ENCODE measurements at regions of chr3 and their contacts with region 1.

Region 1: GRCh38 chr3:100708967-100709841 is at the start of gene TFG:
- DNase-seq: peak; percentile 94 to 98 (median 96)
- ATAC-seq: peak; percentile 95
- H3K4me3 ChIP-seq: peak within 1 kb of the TSS; percentile 68
- H3K4me3 Mint-ChIP-seq: peak within 1 kb of the TSS; percentile 85 to 98 (median 94)
- H3K27ac ChIP-seq: peak within 1 kb of the TSS; percentile 90
- H3K27ac Mint-ChIP-seq: peak within 1 kb of the TSS; percentile 95 to 99 (median 98)
- H3K4me1 ChIP-seq: peaks cover 19 to 21% of the 10 kb centered on the region in 2 donors
- H3K4me1 Mint-ChIP-seq: peaks cover 32 to 50% (median 47%) of the 10 kb centered on the region in 7 donors
- H3K27me3 ChIP-seq: no peaks in the 10 kb centered on the region
- H3K27me3 Mint-ChIP-seq: peaks cover 0 to 14% (median 6%) of the 10 kb centered on the region in 5 donors
- total RNA-seq, gene TFG: 40.8 to 72.2 (median 45.6) TPM

Region 2: DNA sequence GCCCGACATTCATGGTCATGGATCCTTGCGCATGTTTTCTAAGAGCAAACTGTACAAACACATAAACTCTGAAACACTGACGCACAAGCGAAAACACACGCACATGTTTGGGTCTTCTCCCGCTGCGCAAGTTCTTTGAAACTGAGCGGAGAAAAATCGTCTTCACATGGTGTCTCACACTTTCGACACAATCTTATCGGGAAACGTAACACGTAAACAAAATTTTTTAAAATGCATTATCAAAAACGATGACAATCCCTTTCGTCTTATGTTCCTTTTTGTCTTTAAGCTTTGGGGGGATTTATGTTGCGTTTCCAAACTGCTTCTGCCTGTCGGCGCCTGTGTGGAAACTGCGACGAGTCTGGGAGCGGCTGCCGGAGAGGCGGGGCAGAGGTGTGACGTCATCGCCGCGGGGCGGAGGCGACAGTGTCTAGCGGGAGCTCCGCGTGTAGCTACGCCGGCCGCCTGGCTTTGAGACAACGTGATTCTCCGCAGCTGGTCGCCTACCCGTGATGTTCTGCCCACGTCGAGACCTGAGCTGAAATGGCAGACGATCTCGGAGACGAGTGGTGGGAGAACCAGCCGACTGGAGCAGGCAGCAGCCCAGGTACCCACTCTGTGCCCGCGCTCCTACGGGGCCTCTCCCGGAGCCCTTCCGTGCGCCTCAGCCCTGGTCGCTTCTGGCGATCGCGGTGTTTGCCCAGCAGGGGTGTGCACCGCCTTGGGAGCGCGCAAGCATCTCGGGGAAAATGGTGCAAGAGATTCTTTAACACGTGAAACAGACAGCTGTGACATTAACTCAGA is 891.6 kb before region 1 on chr3 and contains the start of gene CMSS1:
- CTCF ChIA-PET with region 1: no interaction called
- POLR2A ChIA-PET with region 1: no interaction called
- intact Hi-C with region 1: loop called (anchors 1 to 5 kb)
- DNase-seq: peak; percentile 96 to 98 (median 97)
- ATAC-seq: peak; percentile 94
- H3K4me3 ChIP-seq: peak within 1 kb of the TSS; percentile 80
- H3K4me3 Mint-ChIP-seq: peak within 1 kb of the TSS; percentile 84 to 99 (median 95)
- H3K27ac ChIP-seq: peak within 1 kb of the TSS; percentile 90
- H3K27ac Mint-ChIP-seq: peak within 1 kb of the TSS; percentile 93 to 100 (median 100)
- H3K4me1 ChIP-seq: peaks cover 18 to 22% of the 10 kb centered on the region in 2 donors
- H3K4me1 Mint-ChIP-seq: peaks cover 19 to 62% (median 41%) of the 10 kb centered on the region in 7 donors
- H3K27me3 ChIP-seq: no peaks in the 10 kb centered on the region
- H3K27me3 Mint-ChIP-seq: no peaks in the 10 kb centered on the region
- total RNA-seq, gene CMSS1: 14.9 to 47.7 (median 18.2) TPM

Region 3: DNA sequence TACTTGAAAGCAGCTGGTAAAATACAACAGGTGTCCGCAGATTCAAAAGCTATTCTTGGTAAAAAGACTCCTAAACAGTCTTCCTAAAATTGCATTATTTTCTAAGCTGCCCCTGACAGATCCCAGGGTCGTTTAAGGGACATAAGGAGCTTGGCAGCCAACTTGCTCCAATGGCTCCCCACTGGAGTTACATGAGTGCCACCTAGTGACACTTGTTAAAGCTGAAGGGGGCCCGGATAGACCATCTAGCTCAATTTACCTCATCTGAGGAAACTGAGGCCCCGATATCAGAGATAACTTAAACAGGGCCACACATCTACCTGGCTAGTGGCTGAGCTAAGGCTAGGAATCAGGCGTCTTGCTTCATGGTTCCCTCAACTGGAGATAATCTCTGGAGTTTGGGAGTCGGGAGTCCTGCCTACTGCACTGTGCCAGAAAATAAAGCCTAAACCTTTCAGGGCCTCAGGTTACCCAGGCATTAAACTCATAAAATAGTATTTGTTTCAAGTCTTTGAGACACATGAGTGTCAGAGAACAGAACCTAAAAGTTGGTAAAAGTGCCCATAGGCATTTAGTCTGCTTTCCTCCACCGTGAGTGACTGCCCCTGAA is 454.9 kb before region 1 on chr3:
- CTCF ChIA-PET with region 1: no interaction called
- POLR2A ChIA-PET with region 1: no interaction called
- intact Hi-C with region 1: no loop called
- DNase-seq: peak in 6 of 9 donors; percentile 12 to 44 (median 22)
- ATAC-seq: peak; percentile 70
- H3K4me3 ChIP-seq: no peak overlapping the region
- H3K4me3 Mint-ChIP-seq: no peak overlapping the region
- H3K27ac ChIP-seq: no peak overlapping the region
- H3K27ac Mint-ChIP-seq: no peak overlapping the region
- H3K4me1 ChIP-seq: no peaks in the 10 kb centered on the region
- H3K4me1 Mint-ChIP-seq: peaks cover 0 to 16% (median 11%) of the 10 kb centered on the region in 7 donors
- H3K27me3 ChIP-seq: no peaks in the 10 kb centered on the region
- H3K27me3 Mint-ChIP-seq: no peaks in the 10 kb centered on the region

Region 4: GRCh38 chr3:100334488-100335351 is 374.5 kb before region 1 on chr3 and contains the start of gene NIT2:
- CTCF ChIA-PET with region 1: no interaction called
- POLR2A ChIA-PET with region 1: no interaction called
- intact Hi-C with region 1: loop called (anchors 1 to 2 kb)
- DNase-seq: peak; percentile 49 to 79 (median 65)
- ATAC-seq: peak; percentile 97
- H3K4me3 ChIP-seq: peak within 1 kb of the TSS; percentile 72
- H3K4me3 Mint-ChIP-seq: peak within 1 kb of the TSS; percentile 86 to 99 (median 94)
- H3K27ac ChIP-seq: peak within 1 kb of the TSS; percentile 76
- H3K27ac Mint-ChIP-seq: peak within 1 kb of the TSS; percentile 87 to 97 (median 93)
- H3K4me1 ChIP-seq: peaks cover 8 to 12% of the 10 kb centered on the region in 2 donors
- H3K4me1 Mint-ChIP-seq: peaks cover 11 to 40% (median 30%) of the 10 kb centered on the region in 7 donors
- H3K27me3 ChIP-seq: no peaks in the 10 kb centered on the region
- H3K27me3 Mint-ChIP-seq: no peaks in the 10 kb centered on the region
- total RNA-seq, gene NIT2: 25.3 to 51.6 (median 30.6) TPM

Region 5: DNA sequence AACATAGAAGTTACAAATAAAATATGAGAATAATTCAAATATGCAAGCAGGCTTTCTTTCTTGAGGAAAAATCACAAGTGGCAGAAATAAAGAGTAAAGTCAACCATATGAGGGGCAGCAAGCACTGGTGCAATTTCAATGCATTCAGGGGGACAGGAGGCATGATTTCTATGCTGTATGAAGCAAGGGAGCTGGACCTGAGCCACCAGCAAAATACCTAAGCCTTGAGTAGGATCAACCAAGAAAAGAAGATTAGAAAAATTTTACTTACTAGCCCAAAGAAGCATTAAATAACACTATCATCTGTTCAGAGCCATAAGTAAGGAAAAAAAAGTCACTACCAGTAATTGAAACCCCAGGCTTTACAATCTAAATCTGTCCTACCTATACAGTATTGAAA is 93.5 kb before region 1 on chr3:
- CTCF ChIA-PET with region 1: no interaction called
- POLR2A ChIA-PET with region 1: no interaction called
- intact Hi-C with region 1: no loop called
- DNase-seq: no peak
- ATAC-seq: no peak
- H3K4me3 ChIP-seq: no peak overlapping the region
- H3K4me3 Mint-ChIP-seq: no peak overlapping the region
- H3K27ac ChIP-seq: no peak overlapping the region
- H3K27ac Mint-ChIP-seq: no peak overlapping the region
- H3K4me1 ChIP-seq: no peaks in the 10 kb centered on the region
- H3K4me1 Mint-ChIP-seq: peaks cover 0 to 12% (median 0%) of the 10 kb centered on the region in 7 donors
- H3K27me3 ChIP-seq: no peaks in the 10 kb centered on the region
- H3K27me3 Mint-ChIP-seq: peaks cover 13 to 38% (median 20%) of the 10 kb centered on the region in 5 donors

Region 6: GRCh38 chr3:100650651-100651611 is 58.3 kb before region 1 on chr3:
- CTCF ChIA-PET with region 1: no interaction called
- POLR2A ChIA-PET with region 1: no interaction called
- intact Hi-C with region 1: loop called (anchors 1 kb)
- DNase-seq: peak in 4 of 9 donors; percentile 8 to 52 (median 24)
- ATAC-seq: peak; percentile 77
- H3K4me3 ChIP-seq: no peak overlapping the region
- H3K4me3 Mint-ChIP-seq: peak overlapping the region in 8 of 10 donors; percentile 23 to 75 (median 51)
- H3K27ac ChIP-seq: no peak overlapping the region
- H3K27ac Mint-ChIP-seq: peak overlapping the region in 8 of 9 donors; percentile 16 to 90 (median 53)
- H3K4me1 ChIP-seq: no peaks in the 10 kb centered on the region
- H3K4me1 Mint-ChIP-seq: peaks cover 3 to 13% (median 9%) of the 10 kb centered on the region in 7 donors
- H3K27me3 ChIP-seq: peaks cover 0 to 3% of the 10 kb centered on the region in 2 donors
- H3K27me3 Mint-ChIP-seq: peaks cover 0 to 4% (median 0%) of the 10 kb centered on the region in 5 donors

Region 7: DNA sequence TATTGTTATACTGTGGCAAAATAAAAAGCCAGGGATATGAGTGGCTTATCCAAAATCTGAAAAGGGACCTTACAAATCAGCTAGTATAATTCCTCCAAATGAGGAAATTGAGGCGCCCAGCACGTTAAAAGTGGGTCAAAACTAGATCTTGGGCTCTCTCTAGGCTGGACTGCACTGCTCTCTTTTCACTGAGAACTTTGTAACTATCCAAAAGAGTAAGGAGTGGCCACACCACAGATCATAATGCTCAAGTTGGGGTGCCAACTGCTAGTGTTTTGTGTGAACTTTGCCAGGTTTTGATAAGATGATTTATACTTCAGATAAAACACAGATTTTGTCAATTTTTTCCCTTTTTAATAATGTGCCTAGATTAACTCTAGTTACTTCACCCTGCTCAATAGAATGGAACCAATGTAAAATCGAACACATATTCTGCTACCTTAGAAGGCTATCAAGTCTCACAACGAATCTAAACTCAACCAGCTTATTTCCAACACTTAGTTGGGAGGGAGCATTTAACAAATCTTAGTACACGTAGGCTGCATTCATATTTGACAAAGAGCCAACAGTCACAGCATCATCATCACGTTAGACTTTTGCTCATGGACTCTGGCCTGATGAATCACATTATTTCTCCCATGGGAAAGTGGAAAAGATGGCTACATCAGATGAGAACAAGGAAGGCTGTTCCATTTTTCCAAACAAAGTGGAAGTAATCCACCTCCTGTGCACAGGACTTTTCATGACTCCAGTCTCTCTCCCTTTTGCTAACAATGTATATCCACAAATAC is 219.6 kb after region 1 on chr3:
- CTCF ChIA-PET with region 1: no interaction called
- POLR2A ChIA-PET with region 1: no interaction called
- intact Hi-C with region 1: no loop called
- DNase-seq: no peak
- ATAC-seq: no peak
- H3K4me3 ChIP-seq: no peak overlapping the region
- H3K4me3 Mint-ChIP-seq: no peak overlapping the region
- H3K27ac ChIP-seq: no peak overlapping the region
- H3K27ac Mint-ChIP-seq: no peak overlapping the region
- H3K4me1 ChIP-seq: no peaks in the 10 kb centered on the region
- H3K4me1 Mint-ChIP-seq: no peaks in the 10 kb centered on the region
- H3K27me3 ChIP-seq: no peaks in the 10 kb centered on the region
- H3K27me3 Mint-ChIP-seq: peaks cover 1 to 21% (median 5%) of the 10 kb centered on the region in 5 donors

Region 8: GRCh38 chr3:101512646-101513418 is 803.6 kb after region 1 on chr3 and contains the start of gene SENP7:
- CTCF ChIA-PET with region 1: no interaction called
- POLR2A ChIA-PET with region 1: no interaction called
- intact Hi-C with region 1: loop called in 1 of 2 experiments (anchors 5 kb)
- DNase-seq: peak; percentile 55 to 82 (median 76)
- ATAC-seq: peak; percentile 74
- H3K4me3 ChIP-seq: peak within 1 kb of the TSS; percentile 84
- H3K4me3 Mint-ChIP-seq: peak within 1 kb of the TSS; percentile 98 to 100 (median 100)
- H3K27ac ChIP-seq: peak within 1 kb of the TSS; percentile 92
- H3K27ac Mint-ChIP-seq: peak within 1 kb of the TSS; percentile 96 to 100 (median 98)
- H3K4me1 ChIP-seq: peaks cover 24 to 41% of the 10 kb centered on the region in 2 donors
- H3K4me1 Mint-ChIP-seq: peaks cover 35 to 79% (median 70%) of the 10 kb centered on the region in 7 donors
- H3K27me3 ChIP-seq: no peaks in the 10 kb centered on the region
- H3K27me3 Mint-ChIP-seq: peaks cover 0 to 4% (median 0%) of the 10 kb centered on the region in 5 donors
- total RNA-seq, gene SENP7: 28.8 to 79.0 (median 49.5) TPM

Region 9: DNA sequence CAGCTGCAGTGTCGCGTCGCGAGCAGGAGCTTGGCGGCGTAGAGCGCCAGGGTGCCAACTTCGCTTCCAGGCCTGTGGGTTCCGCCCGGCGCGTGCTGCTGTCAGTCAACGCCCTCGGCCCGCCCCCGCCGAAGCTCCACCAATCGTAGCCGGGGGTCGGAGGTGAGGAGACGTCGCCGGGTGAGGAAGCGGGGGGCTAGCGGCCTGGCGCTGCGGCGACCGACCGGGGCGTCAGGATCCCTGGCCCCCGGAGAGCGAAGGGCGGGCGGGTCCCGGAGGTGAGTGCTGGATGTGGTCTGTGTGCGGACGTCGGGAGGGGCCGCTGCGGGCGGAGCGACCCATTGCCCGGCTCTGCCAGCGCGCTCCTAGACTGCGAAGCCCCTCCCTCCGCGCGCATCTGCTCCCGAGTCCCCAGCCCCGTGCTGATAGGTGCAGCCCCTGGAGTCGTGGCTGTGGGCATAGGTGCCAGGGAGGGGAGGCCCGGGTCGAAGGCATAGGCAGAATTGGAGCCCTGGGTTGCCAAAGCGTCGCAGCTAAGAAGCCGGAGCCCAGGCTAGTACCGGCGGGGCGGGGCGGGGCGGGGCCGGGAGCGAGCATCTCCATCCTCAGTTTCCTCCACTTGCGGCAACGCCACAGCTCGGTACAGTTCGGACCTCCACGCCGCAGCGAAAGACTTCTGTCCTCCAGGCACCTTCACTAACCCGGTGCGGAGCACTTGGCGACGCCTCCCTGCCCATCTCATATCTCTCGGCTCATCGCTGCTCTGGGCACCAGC is 1070.0 kb after region 1 on chr3 and contains the start of gene NXPE3:
- CTCF ChIA-PET with region 1: no interaction called
- POLR2A ChIA-PET with region 1: no interaction called
- intact Hi-C with region 1: loop called in 1 of 2 experiments (anchors 10 kb)
- DNase-seq: peak; percentile 92 to 97 (median 94)
- ATAC-seq: peak; percentile 95
- H3K4me3 ChIP-seq: peak within 1 kb of the TSS; percentile 60
- H3K4me3 Mint-ChIP-seq: peak within 1 kb of the TSS; percentile 89 to 99 (median 94)
- H3K27ac ChIP-seq: peak within 1 kb of the TSS; percentile 88
- H3K27ac Mint-ChIP-seq: peak within 1 kb of the TSS; percentile 93 to 100 (median 99)
- H3K4me1 ChIP-seq: peaks cover 27% of the 10 kb centered on the region in 2 donors
- H3K4me1 Mint-ChIP-seq: peaks cover 20 to 61% (median 53%) of the 10 kb centered on the region in 7 donors
- H3K27me3 ChIP-seq: no peaks in the 10 kb centered on the region
- H3K27me3 Mint-ChIP-seq: no peaks in the 10 kb centered on the region
- total RNA-seq, gene NXPE3: 25.9 to 48.7 (median 35.5) TPM